ENCODE measurements at regions of chr19 and their contacts with region 1.

Region 1: GRCh38 chr19:58400916-58401839 is 5.7 kb downstream of the RNF225 start:
- DNase-seq: peak; percentile 100
- H3K4me3 Mint-ChIP-seq: peak overlapping the region; percentile 92
- H3K27ac Mint-ChIP-seq: peak overlapping the region; percentile 95
- H3K4me1 Mint-ChIP-seq: peaks cover 13% of the 10 kb centered on the region
- H3K27me3 Mint-ChIP-seq: no peaks in the 10 kb centered on the region
- CTCF ChIP-seq: no peak

Region 2: DNA sequence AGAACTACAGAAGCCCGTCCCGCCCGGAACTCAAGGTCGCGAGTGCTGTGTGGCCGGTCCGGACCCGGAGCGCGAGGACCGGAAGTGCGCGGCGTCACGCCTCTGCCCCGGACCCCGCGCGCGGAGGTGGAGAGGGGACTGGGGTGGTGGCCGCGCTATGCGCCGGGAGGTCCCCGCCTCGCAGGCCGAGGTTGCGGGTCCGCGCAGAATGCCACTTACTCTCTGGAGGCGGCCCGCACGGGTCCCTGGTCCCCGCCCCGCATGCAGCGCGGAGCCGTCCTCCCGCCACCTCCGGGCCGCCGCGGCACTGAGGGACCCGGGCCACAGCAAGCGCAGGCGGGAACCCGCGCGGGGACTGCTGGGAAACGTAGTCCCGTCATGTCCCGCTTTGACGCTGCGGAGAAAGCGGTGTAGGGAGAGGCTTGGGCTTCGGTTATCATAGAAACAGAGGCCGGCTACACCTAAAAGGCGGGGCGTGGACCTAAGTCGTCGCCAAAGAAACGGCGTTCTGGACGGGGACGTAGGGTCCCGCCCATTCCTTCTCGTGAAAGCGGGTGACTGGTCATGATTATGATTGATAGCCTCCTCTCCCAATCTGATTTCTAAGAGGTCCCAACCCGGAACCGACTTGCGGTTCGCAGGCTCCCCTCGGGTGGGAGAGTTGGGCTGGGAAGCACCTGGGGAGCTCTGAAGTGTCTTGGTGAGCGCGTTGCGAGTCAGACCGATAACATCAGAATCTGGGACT is 20.3 kb before region 1 on chr19 and contains the start of gene ZNF837:
- CTCF ChIA-PET with region 1: no interaction called
- POLR2A ChIA-PET with region 1: interaction called, 4 read pairs
- intact Hi-C with region 1: loop called (anchors 1 kb)
- DNase-seq: peak; percentile 100
- H3K4me3 Mint-ChIP-seq: peak within 1 kb of the TSS; percentile 94
- H3K27ac Mint-ChIP-seq: peak within 1 kb of the TSS; percentile 97
- H3K4me1 Mint-ChIP-seq: peaks cover 17% of the 10 kb centered on the region
- H3K27me3 Mint-ChIP-seq: no peaks in the 10 kb centered on the region
- CTCF ChIP-seq: no peak
- total RNA-seq, gene ZNF837: 1.5 and 1.7 TPM in 2 replicates

Region 3: DNA sequence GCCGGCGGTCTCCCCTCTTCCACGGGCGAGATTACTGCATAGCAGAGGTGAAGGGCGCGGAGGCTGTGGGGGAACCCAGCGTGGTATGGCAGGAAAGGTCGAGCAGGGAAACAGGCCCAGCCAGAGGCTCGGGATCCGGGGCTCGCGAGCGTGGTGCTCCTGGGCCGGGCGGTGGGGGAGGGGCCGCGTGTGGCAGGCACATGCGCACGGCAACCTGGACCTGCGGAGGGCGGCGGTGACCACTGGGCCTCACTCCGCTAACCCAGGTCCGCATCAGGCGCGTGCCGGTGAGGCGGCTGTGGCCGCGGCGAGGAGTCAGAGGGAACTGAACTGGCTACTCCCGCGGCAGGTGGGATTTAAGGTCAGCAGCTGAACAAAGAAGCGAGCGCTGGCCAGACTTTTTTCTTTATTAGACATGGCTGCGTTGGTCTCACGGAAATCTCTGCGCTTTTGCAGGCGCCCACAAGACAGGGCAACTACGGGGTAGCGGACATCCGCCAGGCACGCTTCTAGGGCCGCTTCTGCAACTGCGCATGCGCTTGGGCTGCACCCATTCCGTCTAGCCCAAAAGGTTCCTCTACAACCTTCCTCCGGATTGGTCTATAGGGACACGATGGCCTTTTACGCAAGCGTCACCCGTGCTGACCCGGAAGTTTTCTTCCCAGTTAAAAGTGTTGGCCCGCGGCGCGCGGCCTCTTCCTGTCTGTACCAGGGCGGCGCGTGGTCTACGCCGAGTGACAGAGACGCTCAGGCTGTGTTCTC is 14.4 kb before region 1 on chr19 and contains the start of gene RPS5:
- CTCF ChIA-PET with region 1: interaction called, 5 read pairs
- POLR2A ChIA-PET with region 1: interaction called, 22 read pairs
- intact Hi-C with region 1: loop called (anchors 1 kb)
- DNase-seq: peak; percentile 100
- H3K4me3 Mint-ChIP-seq: peak within 1 kb of the TSS; percentile 92
- H3K27ac Mint-ChIP-seq: peak within 1 kb of the TSS; percentile 98
- H3K4me1 Mint-ChIP-seq: peaks cover 18% of the 10 kb centered on the region
- H3K27me3 Mint-ChIP-seq: no peaks in the 10 kb centered on the region
- CTCF ChIP-seq: no peak
- total RNA-seq, gene RPS5: 1,779 and 1,872 TPM in 2 replicates

Measured in MCF 10A (cell line).